IMR-90 (cell line): ENCODE measurements at regions of chr19 and their contacts with region 1.

Region 1: DNA sequence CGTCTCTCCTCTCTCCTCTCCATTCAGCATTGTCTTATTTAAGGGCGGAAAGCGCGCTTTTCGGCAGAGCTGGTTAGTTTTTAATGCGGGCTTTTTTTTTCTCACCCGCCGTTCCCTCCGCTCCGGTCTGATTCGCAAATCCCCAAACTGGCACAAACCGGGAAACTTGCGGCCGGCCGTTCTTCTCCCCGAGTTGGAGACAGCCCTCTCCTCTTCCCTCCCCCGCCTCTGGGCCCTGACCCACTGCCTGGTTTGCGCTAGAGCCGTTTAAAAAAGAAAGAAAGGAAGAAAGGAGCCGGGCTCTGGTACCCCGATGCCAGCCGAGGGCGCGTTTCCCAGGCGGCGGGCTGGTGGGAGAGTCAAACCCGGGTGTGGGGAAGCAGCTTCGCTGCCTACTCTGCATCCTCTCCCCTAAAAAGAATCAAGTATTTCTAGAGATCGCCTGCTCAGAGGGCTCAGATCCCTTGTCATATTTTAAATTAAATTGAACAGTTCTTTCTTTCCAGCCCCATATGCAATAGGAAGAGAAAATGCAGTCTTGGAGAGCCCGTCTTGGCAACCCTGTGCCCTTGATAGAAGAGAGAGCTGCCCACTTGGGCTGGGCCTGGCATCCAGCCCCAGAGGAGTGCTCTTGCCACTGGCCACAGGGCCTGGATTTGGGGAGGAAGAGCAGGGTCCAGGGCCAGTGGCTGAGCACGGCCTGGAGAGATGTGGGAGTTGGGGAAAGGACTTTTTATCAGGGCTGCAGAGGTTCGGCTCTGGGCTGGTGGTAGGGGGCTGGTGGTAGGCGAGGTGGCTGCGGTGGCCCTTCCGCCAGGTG is 19.0 kb downstream of the NFIX start:
- DNase-seq: no peak
- ATAC-seq: no peak
- H3K4me3 ChIP-seq: no peak overlapping the region
- H3K27ac ChIP-seq: no peak overlapping the region
- H3K4me1 ChIP-seq: peaks cover 30% of the 10 kb centered on the region
- H3K27me3 ChIP-seq: no peaks in the 10 kb centered on the region
- CTCF ChIP-seq: no peak
- POLR2A ChIP-seq: no peak
- RAD21 ChIP-seq: no peak

Region 2: DNA sequence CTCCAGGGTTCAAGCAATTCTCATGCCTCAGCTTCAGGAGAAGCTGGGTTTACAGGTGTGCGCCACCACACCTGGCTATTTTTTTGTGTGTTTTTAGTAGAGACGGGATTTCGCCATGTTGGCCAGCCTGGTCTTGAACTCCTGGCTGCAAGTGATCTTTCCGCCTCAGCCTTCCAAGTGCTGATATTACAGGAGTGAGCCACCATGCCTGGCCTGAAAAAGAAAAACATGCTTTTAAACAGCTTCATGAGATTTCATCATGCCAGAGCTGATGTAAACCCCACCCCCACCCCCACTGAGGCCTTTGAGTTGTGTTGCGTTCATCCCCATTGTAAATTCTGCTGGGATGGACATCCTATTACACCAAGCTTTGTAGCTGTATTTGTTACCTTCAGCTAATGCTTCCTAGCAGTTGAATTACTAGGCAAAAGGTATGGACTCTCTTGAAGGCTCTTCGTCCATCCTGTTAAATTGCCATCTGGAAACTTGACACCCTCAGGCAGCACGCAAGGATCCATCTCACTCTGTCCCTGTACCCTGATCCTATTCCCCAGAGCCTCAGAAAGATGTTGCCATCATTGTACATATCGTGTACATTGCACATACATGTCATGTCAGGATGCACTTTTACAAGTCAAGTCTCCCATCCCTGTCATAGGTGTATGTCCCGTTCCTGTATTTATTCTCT is 28.3 kb after region 1 on chr19:
- CTCF ChIA-PET with region 1: interaction called, 16 read pairs
- POLR2A ChIA-PET with region 1: no interaction called
- dilution Hi-C with region 1: no loop called
- in situ Hi-C with region 1: no loop called
- intact Hi-C with region 1: no loop called
- DNase-seq: peak; percentile 59
- ATAC-seq: no peak
- H3K4me3 ChIP-seq: no peak overlapping the region
- H3K27ac ChIP-seq: no peak overlapping the region
- H3K4me1 ChIP-seq: peaks cover 44% of the 10 kb centered on the region
- H3K27me3 ChIP-seq: no peaks in the 10 kb centered on the region
- CTCF ChIP-seq: no peak
- POLR2A ChIP-seq: no peak
- RAD21 ChIP-seq: no peak

Region 3: DNA sequence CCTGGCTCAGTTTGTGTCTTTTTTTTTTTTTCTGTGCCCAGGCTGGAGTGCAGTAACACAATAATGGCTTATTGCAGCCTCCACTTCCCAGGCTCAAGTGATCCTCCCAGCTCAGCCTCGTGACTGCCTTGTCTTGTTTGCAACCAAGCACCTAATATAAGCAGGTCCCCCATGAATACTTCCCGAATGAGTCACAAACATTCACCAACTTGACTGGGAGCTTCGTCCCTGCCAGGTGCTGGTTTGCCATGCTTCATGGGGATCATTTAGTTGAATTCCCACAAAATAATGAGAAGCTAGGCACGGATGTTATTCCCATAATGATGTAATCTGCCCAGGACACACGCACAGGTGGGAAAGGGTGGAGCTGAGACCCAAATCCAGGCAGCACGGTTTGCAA is 315.5 kb after region 1 on chr19:
- CTCF ChIA-PET with region 1: no interaction called
- POLR2A ChIA-PET with region 1: no interaction called
- dilution Hi-C with region 1: no loop called
- in situ Hi-C with region 1: no loop called
- intact Hi-C with region 1: no loop called
- DNase-seq: peak; percentile 31
- ATAC-seq: no peak
- H3K4me3 ChIP-seq: no peak overlapping the region
- H3K27ac ChIP-seq: no peak overlapping the region
- H3K4me1 ChIP-seq: no peaks in the 10 kb centered on the region
- H3K27me3 ChIP-seq: no peaks in the 10 kb centered on the region
- CTCF ChIP-seq: no peak
- POLR2A ChIP-seq: no peak
- RAD21 ChIP-seq: no peak